ENCODE measurements at regions of chr2 and their contacts with region 1.

Region 1: DNA sequence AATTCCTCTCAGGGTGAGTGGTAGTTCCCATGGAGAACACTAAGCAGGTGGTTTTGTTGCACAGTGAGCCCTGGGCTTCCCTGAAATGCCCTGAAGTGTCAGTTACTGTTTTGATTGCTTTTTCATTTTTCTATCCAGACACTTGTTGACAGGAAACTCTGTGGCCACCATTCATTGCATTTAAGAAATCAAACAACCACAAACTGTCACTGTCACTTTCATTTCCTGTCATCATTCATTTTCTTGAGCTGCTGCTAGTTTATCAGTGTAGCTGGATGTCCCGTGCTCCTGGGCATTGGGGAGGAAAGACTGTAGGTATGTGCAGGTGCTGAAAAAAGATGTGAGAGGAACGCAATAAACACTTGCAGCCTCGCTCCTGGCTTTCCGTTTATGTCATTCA is 891.6 kb upstream of the ZEB2 start:
- DNase-seq: peak; percentile 36
- H3K4me3 Mint-ChIP-seq: peak overlapping the region; percentile 1
- H3K27ac Mint-ChIP-seq: peak overlapping the region; percentile 32
- H3K4me1 Mint-ChIP-seq: peaks cover 26% of the 10 kb centered on the region
- H3K27me3 Mint-ChIP-seq: peaks cover 64% of the 10 kb centered on the region

Region 2: DNA sequence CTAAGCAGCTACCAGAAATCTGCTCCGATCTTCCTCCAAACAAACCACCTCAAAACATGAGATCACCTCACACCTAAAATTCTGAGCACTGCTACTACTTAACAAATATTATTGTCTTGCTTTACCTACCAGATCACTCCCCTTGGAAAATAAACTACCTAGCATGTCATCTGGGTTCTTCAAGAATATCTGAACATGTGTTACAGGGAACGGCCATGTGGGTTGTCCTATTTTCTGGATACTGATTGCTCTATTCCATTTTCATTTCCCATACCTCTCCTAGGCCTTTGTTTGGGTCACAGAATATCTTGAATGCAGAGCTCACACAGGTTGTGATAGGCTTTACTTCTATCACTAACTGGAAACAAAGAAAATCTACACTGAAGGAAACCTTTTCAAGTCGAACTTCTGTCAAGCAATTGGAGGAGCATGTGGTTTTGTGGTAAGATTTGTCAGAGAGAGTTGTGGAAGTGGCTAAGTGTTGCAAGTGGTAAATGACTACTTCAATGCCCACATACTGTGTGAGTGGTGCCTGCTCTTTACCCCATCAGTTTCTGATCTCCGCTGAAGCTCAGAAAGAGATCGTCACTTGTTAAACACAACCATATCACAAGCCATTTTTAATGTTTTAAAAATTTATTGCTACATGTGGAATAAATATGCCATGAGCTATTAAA is 152.5 kb before region 1 on chr2:
- intact Hi-C with region 1: loop called (anchors 1 kb)
- DNase-seq: peak; percentile 10
- H3K4me3 Mint-ChIP-seq: no peak overlapping the region
- H3K27ac Mint-ChIP-seq: no peak overlapping the region
- H3K4me1 Mint-ChIP-seq: peaks cover 12% of the 10 kb centered on the region
- H3K27me3 Mint-ChIP-seq: peaks cover 52% of the 10 kb centered on the region

Region 3: DNA sequence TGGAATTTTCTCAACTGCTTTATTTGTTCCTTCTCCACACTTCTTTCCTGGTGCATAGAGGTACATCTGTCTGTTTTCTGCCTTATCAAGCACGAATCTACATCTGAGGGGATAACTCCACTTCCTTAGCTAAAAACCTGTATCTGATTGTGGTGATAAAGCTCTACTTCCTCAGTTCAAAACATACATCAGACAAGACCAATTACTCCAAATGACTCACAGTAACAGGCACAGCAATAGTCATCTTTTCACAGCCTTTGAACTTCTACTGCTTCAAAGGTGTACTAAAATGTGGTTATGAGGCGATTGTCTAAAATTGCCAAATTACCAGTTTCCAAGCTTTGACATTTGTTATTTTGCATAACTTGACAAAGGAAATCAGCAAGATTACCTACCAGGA is 88.0 kb before region 1 on chr2:
- intact Hi-C with region 1: loop called (anchors 1 kb)
- DNase-seq: peak; percentile 9
- H3K4me3 Mint-ChIP-seq: no peak overlapping the region
- H3K27ac Mint-ChIP-seq: peak overlapping the region; percentile 20
- H3K4me1 Mint-ChIP-seq: peaks cover 18% of the 10 kb centered on the region
- H3K27me3 Mint-ChIP-seq: peaks cover 26% of the 10 kb centered on the region

Region 4: GRCh38 chr2:145524836-145525235 is 113.3 kb after region 1 on chr2:
- intact Hi-C with region 1: no loop called
- DNase-seq: no peak
- H3K4me3 Mint-ChIP-seq: no peak overlapping the region
- H3K27ac Mint-ChIP-seq: no peak overlapping the region
- H3K4me1 Mint-ChIP-seq: no peaks in the 10 kb centered on the region
- H3K27me3 Mint-ChIP-seq: no peaks in the 10 kb centered on the region

Region 5: GRCh38 chr2:145744541-145745386 is 333.3 kb after region 1 on chr2:
- intact Hi-C with region 1: loop called (anchors 10 kb)
- DNase-seq: no peak
- H3K4me3 Mint-ChIP-seq: no peak overlapping the region
- H3K27ac Mint-ChIP-seq: peak overlapping the region; percentile 31
- H3K4me1 Mint-ChIP-seq: peaks cover 27% of the 10 kb centered on the region
- H3K27me3 Mint-ChIP-seq: peaks cover 11% of the 10 kb centered on the region

Measured in activated T-helper 2 cell treated with anti-CD3 and anti-CD28 coated beads, Interferon-gamma antibody, Interleukin-2, Interleukin-4, amounts not matched to agents 10 μg/mL and 5 μg/mL and 100 μg/mL, durations not matched to agents 14 hours and 24 hours and 36 hours (primary cell).